Lower leg skin (tissue), 4 donors: ENCODE measurements at regions of chr15 and their contacts with region 1.

Region 1: DNA sequence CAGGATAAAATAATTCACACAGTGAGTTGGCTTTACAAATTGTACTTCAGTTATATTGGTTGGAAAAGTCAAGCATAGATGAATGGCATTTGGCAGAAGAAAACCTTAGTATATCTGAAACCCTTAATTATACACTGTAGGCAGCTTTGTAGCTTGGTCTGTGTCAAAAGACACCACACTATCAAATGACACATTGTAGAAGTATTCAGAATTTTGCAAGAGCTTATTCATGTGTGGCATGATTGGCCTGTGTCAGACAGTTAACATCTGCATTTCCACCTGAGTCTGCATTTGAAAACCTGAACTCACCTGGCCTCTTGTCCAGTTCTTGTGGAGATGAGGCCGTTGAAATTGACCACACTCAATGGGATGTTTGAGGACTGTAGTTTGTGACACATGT is 13.8 kb downstream of the TMEM266 start:
- DNase-seq: no peak
- H3K4me3 ChIP-seq: no peak overlapping the region
- CTCF ChIP-seq: no peak
- POLR2A ChIP-seq: no peak

Region 2: DNA sequence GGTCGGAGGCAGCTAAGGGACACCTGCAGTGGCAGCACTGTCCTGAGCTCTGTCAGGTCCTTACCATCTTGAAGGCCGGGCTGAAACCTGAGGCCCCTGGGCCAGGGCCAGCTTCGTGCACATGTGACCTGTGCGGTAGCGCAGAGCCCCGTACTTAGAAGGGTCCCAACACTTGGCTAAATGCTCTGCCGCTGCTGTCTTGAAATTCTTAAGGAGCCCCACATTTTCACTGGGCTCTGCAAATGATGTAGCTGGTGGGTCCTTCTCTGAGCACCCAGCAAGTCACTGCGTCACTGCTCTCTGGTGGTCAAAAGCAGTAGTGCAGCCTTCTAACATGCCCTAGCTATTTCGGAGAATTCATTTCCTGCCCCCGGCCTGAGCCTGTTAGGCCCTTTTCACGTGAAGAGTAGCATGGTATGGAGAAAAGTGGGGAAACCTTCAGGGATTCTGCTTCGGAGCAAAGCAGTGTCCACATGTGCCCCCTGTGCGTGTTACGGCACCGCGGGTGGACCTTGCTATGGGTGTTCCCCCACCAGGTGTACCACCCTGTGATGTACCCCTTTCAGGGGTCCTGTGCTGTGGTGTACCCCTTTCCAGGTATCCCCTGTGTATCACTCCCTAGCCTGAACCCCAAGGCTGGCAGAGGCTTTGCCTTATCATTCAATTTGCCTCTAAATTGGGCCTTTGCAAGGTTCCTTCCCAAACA is 65.9 kb after region 1 on chr15:
- intact Hi-C with region 1: loop called (anchors 10 kb)
- DNase-seq: peak; percentile 64 to 84
- H3K4me3 ChIP-seq: no peak overlapping the region
- CTCF ChIP-seq: peak in 1 of 3 donors; percentile 77
- POLR2A ChIP-seq: no peak